Dendritic cell treated with granulocyte-macrophage colony-stimulating factor and Interleukin-4, amounts not matched to agents 40 ng/mL and 50 ng/mL, for 4 days (primary cell): ENCODE measurements at regions of chr1 and their contacts with region 1.

Region 1: GRCh38 chr1:212455803-212456528 is 23.2 kb downstream of the NENF start:
- H3K4me3 Mint-ChIP-seq: no peak overlapping the region
- H3K27ac Mint-ChIP-seq: no peak overlapping the region
- H3K4me1 Mint-ChIP-seq: peaks cover 19% of the 10 kb centered on the region
- H3K27me3 Mint-ChIP-seq: peaks cover 8% of the 10 kb centered on the region

Region 2: DNA sequence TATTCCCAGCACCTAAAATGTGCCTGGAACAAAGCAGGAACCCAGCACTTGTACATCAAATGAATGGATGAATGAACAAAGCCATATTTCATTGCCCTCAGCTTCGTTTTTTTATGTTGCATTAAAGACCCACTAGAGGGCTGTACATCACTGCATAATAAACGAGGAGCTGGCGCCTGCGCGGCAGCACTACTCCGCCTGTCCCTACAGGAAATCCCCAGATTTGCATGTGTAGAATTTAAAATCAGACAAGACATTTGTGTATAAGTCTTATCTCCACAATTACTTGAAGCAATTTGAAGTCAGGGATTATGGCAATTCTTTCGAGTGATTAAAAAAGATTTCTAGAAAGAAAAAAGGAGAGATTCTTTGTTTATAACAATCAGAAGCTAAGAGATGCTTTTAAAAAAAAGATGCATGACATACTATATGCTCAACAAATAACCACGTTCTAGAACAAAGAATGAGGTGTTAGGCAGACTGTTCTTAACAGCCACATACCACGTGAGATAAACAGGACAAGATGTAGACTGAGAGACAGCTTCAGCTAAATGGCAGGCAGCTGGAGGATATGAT is 775.1 kb before region 1 on chr1:
- intact Hi-C with region 1: loop called (anchors 10 kb)
- H3K4me3 Mint-ChIP-seq: no peak overlapping the region
- H3K27ac Mint-ChIP-seq: no peak overlapping the region
- H3K4me1 Mint-ChIP-seq: peaks cover 8% of the 10 kb centered on the region
- H3K27me3 Mint-ChIP-seq: peaks cover 7% of the 10 kb centered on the region

Region 3: GRCh38 chr1:212062832-212063438 is 393.0 kb before region 1 on chr1:
- intact Hi-C with region 1: loop called (anchors 2 kb)
- H3K4me3 Mint-ChIP-seq: no peak overlapping the region
- H3K27ac Mint-ChIP-seq: no peak overlapping the region
- H3K4me1 Mint-ChIP-seq: no peaks in the 10 kb centered on the region
- H3K27me3 Mint-ChIP-seq: no peaks in the 10 kb centered on the region

Region 4: GRCh38 chr1:212291505-212292134 is 164.3 kb before region 1 on chr1:
- intact Hi-C with region 1: loop called (anchors 5 kb)
- H3K4me3 Mint-ChIP-seq: no peak overlapping the region
- H3K27ac Mint-ChIP-seq: no peak overlapping the region
- H3K4me1 Mint-ChIP-seq: peaks cover 73% of the 10 kb centered on the region
- H3K27me3 Mint-ChIP-seq: no peaks in the 10 kb centered on the region

Region 5: GRCh38 chr1:212368073-212368484 is 87.9 kb before region 1 on chr1:
- intact Hi-C with region 1: loop called (anchors 5 kb)
- H3K4me3 Mint-ChIP-seq: no peak overlapping the region
- H3K27ac Mint-ChIP-seq: no peak overlapping the region
- H3K4me1 Mint-ChIP-seq: no peaks in the 10 kb centered on the region
- H3K27me3 Mint-ChIP-seq: no peaks in the 10 kb centered on the region

Region 6: GRCh38 chr1:212782422-212783154 is 326.6 kb after region 1 on chr1:
- intact Hi-C with region 1: loop called (anchors 2 kb)
- H3K4me3 Mint-ChIP-seq: no peak overlapping the region
- H3K27ac Mint-ChIP-seq: peak overlapping the region; percentile 83
- H3K4me1 Mint-ChIP-seq: peaks cover 34% of the 10 kb centered on the region
- H3K27me3 Mint-ChIP-seq: no peaks in the 10 kb centered on the region

Region 7: DNA sequence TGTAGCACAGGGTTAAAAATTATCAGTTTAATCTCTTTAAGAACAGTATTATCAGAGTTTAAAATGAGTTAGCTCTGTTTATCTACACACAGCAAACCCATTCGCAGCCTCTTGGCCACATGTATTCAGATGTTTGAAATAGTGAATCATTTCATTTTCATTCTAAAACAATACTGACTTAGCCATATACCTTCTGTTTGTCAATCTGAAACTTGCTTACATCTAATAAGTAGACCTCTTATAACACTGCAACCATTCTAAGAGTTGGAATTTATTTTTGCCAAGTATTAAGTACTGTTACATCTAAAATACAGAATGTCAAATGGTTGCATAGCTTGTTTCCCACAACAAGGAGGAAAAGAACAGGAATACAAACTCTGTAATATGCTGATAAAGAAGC is 534.3 kb after region 1 on chr1:
- intact Hi-C with region 1: loop called (anchors 5 kb)
- H3K4me3 Mint-ChIP-seq: no peak overlapping the region
- H3K27ac Mint-ChIP-seq: no peak overlapping the region
- H3K4me1 Mint-ChIP-seq: no peaks in the 10 kb centered on the region
- H3K27me3 Mint-ChIP-seq: no peaks in the 10 kb centered on the region

Region 8: GRCh38 chr1:213474054-213474453 is 1018.1 kb after region 1 on chr1:
- intact Hi-C with region 1: no loop called
- H3K4me3 Mint-ChIP-seq: no peak overlapping the region
- H3K27ac Mint-ChIP-seq: no peak overlapping the region
- H3K4me1 Mint-ChIP-seq: no peaks in the 10 kb centered on the region
- H3K27me3 Mint-ChIP-seq: no peaks in the 10 kb centered on the region